Aorta (tissue), 5 donors: ENCODE measurements at regions of chr4 and their contacts with region 1.

Region 1: GRCh38 chr4:53908661-53909078 is 155.7 kb downstream of the CHIC2 start:
- DNase-seq: no peak
- ATAC-seq: peak; percentile 89
- H3K4me3 ChIP-seq: peak overlapping the region; percentile 54 to 76
- H3K27ac ChIP-seq: peak overlapping the region; percentile 51 to 82
- H3K4me1 ChIP-seq: peaks cover 2 to 4% of the 10 kb centered on the region in 2 donors
- H3K27me3 ChIP-seq: no peaks in the 10 kb centered on the region

Region 2: DNA sequence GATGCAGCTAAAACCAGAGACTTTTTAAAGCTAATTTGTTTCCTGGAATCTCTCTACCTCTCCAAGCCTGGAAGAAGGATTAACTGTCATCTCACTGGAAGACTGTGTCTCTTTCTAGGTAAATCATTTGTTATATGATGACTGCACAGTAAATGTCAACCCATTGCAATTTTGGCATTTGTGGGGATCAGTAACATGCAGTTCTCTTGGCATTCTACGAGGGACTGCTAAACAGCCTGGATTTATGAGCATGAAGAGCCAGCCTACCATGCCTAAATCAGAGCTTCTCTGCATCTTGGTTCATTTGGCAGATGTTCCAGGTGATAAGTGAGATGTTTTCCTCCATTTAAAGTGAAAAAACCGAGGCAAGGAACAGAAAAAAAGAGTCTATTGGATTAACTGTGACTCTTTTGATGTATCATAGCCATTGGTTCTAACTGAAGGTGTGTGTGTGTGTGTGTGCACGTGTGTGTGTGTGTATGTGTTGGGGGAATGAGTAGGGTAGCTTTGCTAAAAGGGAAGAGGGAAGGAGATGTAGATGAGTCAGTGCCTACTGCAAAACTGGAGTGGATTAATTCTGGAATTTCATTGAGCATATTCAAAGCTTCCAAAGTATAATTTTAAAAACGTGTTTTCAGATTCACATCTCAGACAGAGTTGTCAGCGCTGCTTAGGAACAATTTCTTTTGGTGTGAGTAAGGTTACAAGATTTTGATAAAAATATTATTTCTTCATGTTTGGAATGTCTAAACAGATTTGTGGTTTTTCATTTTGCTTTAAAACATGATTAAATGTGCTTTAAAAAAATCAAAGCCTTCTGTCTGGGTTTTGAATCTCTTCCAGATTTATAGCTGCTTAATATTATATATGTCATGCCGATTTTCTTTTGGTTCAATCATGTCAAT is 194.2 kb before region 1 on chr4:
- intact Hi-C with region 1: loop called (anchors 5 kb)
- DNase-seq: no peak
- ATAC-seq: no peak
- H3K4me3 ChIP-seq: no peak overlapping the region
- H3K27ac ChIP-seq: peak overlapping the region in 1 of 2 donors; percentile 71
- H3K4me1 ChIP-seq: peaks cover 3 to 7% of the 10 kb centered on the region in 2 donors
- H3K27me3 ChIP-seq: no peaks in the 10 kb centered on the region

Region 3: GRCh38 chr4:53748328-53748772 is 160.3 kb before region 1 on chr4:
- intact Hi-C with region 1: no loop called
- DNase-seq: peak in 1 of 2 donors; percentile 42
- ATAC-seq: no peak
- H3K4me3 ChIP-seq: no peak overlapping the region
- H3K27ac ChIP-seq: no peak overlapping the region
- H3K4me1 ChIP-seq: no peaks in the 10 kb centered on the region
- H3K27me3 ChIP-seq: no peaks in the 10 kb centered on the region

Region 4: DNA sequence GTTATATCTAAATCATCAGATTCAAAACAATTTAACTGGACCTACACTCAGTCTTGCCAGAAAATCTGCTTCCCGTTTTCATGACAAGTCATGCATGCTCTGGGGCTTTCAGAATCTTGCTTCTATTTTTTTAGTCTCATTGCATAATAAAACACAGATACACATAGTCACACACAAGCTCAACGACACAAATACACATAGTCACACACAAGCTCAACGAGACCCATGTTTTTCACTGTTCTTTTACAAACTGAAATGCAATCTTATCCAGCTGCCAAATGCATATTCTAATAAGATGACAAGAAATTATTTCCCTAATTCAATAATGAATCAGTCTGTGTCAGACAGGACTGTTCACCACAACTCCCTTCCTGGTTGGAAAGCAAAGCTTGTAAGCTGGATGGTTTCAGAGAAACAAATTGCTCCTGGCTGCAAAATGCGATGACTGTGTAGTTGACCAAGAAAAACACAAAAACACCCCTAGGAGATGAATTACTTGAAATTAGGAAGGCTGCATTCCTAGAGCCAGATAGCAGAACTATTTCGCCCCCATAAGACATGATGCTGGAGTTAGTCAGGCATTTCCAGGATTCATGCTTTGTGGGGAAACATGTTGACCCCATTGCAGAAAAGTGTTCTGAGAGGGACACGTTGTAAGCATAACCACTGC is 53.0 kb before region 1 on chr4:
- intact Hi-C with region 1: no loop called
- DNase-seq: no peak
- ATAC-seq: peak; percentile 86
- H3K4me3 ChIP-seq: no peak overlapping the region
- H3K27ac ChIP-seq: no peak overlapping the region
- H3K4me1 ChIP-seq: peaks cover 0 to 3% of the 10 kb centered on the region in 2 donors
- H3K27me3 ChIP-seq: no peaks in the 10 kb centered on the region

Region 5: GRCh38 chr4:54228056-54228527 is 319.4 kb after region 1 on chr4:
- intact Hi-C with region 1: loop called (anchors 5 kb)
- DNase-seq: peak; percentile 84 to 93
- ATAC-seq: peak; percentile 75
- H3K4me3 ChIP-seq: peak overlapping the region; percentile 59 to 78
- H3K27ac ChIP-seq: peak overlapping the region in 1 of 2 donors; percentile 65
- H3K4me1 ChIP-seq: no peaks in the 10 kb centered on the region
- H3K27me3 ChIP-seq: no peaks in the 10 kb centered on the region